Posterior vena cava (tissue), 2 donors: ENCODE measurements at regions of chr19 and their contacts with region 1.

Region 1: DNA sequence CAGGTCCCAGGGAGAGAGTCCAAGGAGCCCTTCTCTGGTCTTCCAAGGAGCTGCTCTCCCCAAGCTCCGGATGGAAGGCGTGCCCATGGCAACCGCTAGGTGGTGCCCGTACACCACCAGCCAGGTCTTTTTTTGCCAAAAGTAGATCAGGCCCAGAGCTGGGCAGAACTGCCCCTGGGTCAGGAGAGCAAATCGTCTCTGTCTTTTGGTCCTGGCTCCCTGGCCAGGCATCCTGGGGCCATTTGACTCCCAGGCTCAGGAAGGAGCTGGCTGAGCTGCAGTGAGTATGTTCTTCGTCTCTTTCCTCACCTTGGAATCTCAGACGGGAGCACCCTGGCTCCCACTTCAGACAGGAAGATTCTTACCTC is 24.6 kb upstream of the BCL3 start:
- DNase-seq: peak; percentile 95

Region 2: GRCh38 chr19:44677019-44677821 is 46.7 kb before region 1 on chr19:
- intact Hi-C with region 1: no loop called
- DNase-seq: no peak

Region 3: GRCh38 chr19:44770550-44771257 is 46.8 kb after region 1 on chr19:
- intact Hi-C with region 1: loop called (anchors 1 to 5 kb)
- DNase-seq: peak; percentile 97

Region 4: DNA sequence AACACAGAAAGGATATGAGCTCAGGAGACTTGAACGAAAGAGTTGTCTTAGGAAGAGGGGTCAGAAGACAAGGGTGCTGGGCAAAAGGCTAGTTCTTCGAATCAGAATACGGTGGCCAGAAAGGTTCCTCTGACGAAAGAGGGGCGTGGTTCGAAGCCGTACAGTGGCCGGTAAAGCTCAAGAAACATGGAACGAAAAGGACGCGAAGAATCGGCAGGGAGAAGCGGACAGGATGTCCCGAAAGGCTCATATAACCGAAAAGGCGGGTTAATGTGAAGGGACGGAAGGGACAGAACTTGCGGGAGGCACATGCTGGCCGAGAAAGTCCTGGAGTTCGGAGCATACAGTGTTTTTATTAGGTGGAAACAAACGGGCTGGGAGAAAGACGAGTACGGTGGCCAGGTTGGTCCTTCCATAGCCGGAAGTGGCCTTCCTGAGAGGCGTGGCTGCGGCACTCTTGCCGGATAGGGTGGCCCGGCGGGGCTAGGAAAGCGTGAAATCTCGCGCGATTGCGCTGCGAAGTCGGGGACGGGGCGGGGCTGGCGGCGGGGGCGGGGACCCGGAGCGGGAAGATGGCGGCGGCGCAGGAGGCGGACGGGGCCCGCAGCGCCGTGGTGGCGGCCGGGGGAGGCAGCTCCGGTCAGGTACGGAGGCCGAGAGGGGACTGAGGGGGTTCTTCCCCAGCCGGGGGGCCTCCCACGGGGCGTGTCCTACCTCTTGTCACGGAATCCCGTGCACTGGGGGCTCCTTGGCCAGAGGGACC is 231.1 kb after region 1 on chr19 and contains the start of gene CLPTM1:
- intact Hi-C with region 1: no loop called
- DNase-seq: peak; percentile 99
- total RNA-seq, gene CLPTM1: 69.9 to 78.5 TPM